Common myeloid progenitor, CD34-positive (primary cell): ENCODE measurements at regions of chr11 and their contacts with region 1.

Region 1: GRCh38 chr11:9748361-9748970 is 84.6 kb downstream of the SWAP70 start:
- DNase-seq: peak; percentile 85 to 92 (median 91)
- H3K4me3 ChIP-seq: no peak overlapping the region
- H3K27ac ChIP-seq: no peak overlapping the region
- H3K4me1 ChIP-seq: peaks cover 3 to 57% (median 21%) of the 10 kb centered on the region in 4 experiments
- H3K27me3 ChIP-seq: no peaks in the 10 kb centered on the region

Region 2: GRCh38 chr11:9573052-9573774 is 175.3 kb before region 1 on chr11 and contains the start of gene WEE1:
- CTCF ChIA-PET with region 1: interaction called, 10 read pairs
- POLR2A ChIA-PET with region 1: no interaction called
- DNase-seq: peak; percentile 97 to 99 (median 97)
- H3K4me3 ChIP-seq: peak within 1 kb of the TSS; percentile 81 to 95 (median 89)
- H3K27ac ChIP-seq: peak within 1 kb of the TSS; percentile 78 to 90
- H3K4me1 ChIP-seq: peaks cover 14 to 45% (median 30%) of the 10 kb centered on the region in 4 experiments
- H3K27me3 ChIP-seq: no peaks in the 10 kb centered on the region

Region 3: DNA sequence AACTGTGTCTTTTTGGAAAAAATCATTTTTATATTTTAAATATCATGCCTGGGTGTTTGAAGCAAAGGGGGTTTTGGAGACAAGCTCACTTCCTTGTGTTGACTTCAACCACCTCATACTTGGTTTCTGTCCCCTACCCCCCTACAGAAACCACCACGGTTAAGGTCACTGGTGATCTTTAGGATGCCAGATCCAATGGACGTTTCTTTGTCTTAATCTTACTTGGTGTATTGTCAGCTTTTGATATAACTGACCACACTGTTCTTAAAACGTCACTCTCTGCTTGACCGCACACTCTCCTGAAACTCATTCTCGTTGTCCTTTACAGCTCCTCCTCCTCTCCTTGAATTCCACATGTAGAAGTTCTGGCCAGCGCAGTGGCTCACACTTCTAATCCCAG is 119.4 kb before region 1 on chr11:
- CTCF ChIA-PET with region 1: interaction called, 12 read pairs
- POLR2A ChIA-PET with region 1: no interaction called
- DNase-seq: no peak
- H3K4me3 ChIP-seq: no peak overlapping the region
- H3K27ac ChIP-seq: no peak overlapping the region
- H3K4me1 ChIP-seq: peaks cover 0 to 8% (median 2%) of the 10 kb centered on the region in 4 experiments
- H3K27me3 ChIP-seq: no peaks in the 10 kb centered on the region

Region 4: GRCh38 chr11:9688716-9689511 is 59.6 kb before region 1 on chr11:
- CTCF ChIA-PET with region 1: interaction called, 20 read pairs
- POLR2A ChIA-PET with region 1: no interaction called
- DNase-seq: peak; percentile 71 to 93 (median 88)
- H3K4me3 ChIP-seq: peak overlapping the region in 3 of 7 experiments; percentile 33 to 60 (median 44)
- H3K27ac ChIP-seq: peak overlapping the region; percentile 51 to 72
- H3K4me1 ChIP-seq: peaks cover 44 to 64% (median 51%) of the 10 kb centered on the region in 4 experiments
- H3K27me3 ChIP-seq: no peaks in the 10 kb centered on the region

Region 5: DNA sequence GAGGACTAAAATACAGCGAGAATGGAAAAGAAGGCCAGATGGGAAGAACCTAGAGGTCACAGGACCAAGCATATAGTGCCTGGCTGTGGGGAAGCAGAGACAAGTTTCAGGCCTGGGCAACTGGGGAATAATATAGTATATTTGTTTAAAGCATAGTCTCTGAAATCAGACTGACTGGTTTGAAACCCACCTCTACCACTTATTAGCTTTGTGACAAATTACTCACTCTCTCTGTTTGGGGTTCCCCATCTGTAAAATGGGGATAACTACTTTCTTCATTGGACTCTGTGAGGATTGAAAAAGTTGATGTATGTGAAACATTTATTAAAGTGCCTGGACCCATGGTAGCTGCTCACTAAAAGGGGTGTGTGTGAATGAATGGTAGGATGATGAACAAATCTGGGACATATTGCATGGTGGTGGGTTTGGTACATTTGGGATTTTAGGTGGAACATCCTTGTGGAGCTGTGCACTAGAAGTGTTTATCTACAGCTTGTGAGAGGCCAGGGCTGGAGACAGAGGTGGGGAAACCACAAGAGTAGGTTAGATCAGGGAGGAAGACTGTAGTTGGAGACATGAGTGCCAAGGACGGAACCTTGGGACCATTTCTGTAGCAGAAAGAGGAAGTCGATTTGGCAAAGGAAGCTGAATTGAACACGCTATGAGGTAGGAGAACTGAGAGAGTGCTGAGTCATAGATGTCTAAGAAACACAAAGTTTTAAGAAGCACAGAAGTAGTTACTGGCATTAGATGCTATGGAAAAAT is 32.0 kb before region 1 on chr11:
- CTCF ChIA-PET with region 1: interaction called, 33 read pairs
- POLR2A ChIA-PET with region 1: no interaction called
- DNase-seq: peak; percentile 93 to 99 (median 98)
- H3K4me3 ChIP-seq: peak overlapping the region in 4 of 7 experiments; percentile 7 to 65 (median 36)
- H3K27ac ChIP-seq: peak overlapping the region; percentile 83 to 84
- H3K4me1 ChIP-seq: peaks cover 36 to 68% (median 60%) of the 10 kb centered on the region in 4 experiments
- H3K27me3 ChIP-seq: no peaks in the 10 kb centered on the region

Region 6: DNA sequence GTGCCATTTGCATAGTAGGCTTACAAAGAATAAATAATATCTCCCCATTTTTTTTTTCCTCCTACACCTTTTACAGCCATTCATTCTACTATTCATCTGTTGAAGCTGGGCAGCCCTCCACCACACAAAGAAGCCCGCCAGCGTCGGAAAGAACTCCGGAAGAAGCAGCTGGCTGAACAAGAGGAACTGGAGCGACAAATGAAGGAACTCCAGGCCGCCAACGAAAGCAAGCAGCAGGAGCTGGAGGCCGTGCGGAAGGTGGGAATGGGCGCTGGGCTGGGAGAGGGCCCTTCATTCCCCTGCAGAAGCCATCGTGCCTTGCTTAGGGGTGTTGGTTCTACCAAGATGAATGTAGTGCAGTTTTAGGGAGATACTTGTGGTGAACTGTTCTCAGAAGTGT is 16.0 kb before region 1 on chr11:
- CTCF ChIA-PET with region 1: interaction called, 26 read pairs
- POLR2A ChIA-PET with region 1: no interaction called
- DNase-seq: no peak
- H3K4me3 ChIP-seq: no peak overlapping the region
- H3K27ac ChIP-seq: no peak overlapping the region
- H3K4me1 ChIP-seq: peaks cover 0 to 15% (median 0%) of the 10 kb centered on the region in 4 experiments
- H3K27me3 ChIP-seq: no peaks in the 10 kb centered on the region